Activated CD4-positive, alpha-beta memory T cell treated with anti-CD3 and anti-CD28 coated beads for 36 hours (primary cell): ENCODE measurements at regions of chr19 and their contacts with region 1.

Region 1: DNA sequence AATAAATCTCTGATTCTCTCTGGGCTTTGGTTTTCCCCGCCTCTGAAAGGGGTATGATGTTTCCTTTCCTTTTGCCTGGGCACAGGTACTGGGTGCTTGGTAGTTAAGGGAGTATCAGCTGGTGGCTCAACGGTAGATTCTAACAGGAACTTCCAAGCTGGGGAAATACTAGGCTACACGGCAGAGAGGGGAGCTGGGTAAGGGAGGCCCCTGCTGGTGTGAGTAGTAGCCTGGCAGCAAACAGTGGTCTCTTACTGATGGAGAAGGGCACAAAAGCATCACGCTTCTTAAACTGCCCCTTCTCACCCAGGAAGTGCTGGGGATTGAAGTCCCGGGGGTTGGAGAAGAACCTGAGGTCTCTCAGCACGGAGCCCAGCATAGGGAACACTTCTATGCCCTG is 26.9 kb upstream of the CYP2A7 start:
- DNase-seq: peak; percentile 63
- H3K4me3 Mint-ChIP-seq: peak overlapping the region; percentile 65
- H3K27ac Mint-ChIP-seq: no peak overlapping the region
- H3K4me1 Mint-ChIP-seq: peaks cover 9% of the 10 kb centered on the region
- H3K27me3 Mint-ChIP-seq: peaks cover 4% of the 10 kb centered on the region

Region 2: DNA sequence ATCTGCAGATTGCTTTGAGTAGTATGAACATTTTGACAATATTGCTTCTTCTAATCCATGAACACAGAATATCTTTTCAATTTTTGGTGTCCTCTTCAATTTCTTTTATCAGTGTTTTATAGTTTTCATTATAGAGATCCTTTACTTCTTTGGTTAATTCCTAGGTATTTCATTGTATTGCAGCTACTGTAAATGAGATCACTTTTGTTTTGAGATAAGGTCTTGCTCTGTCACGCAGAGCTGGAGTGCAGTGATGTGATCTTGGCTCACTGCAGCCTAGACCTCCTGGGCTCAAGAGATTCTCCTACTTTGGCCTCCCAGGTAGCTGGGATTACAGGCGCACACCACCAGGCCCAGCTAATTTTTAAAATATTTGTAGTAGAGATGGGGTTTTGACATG is 36.8 kb before region 1 on chr19:
- CTCF ChIA-PET with region 1: interaction called, 3 read pairs
- POLR2A ChIA-PET with region 1: no interaction called
- intact Hi-C with region 1: loop called (anchors 1 kb)
- DNase-seq: no peak
- H3K4me3 Mint-ChIP-seq: no peak overlapping the region
- H3K27ac Mint-ChIP-seq: no peak overlapping the region
- H3K4me1 Mint-ChIP-seq: peaks cover 7% of the 10 kb centered on the region
- H3K27me3 Mint-ChIP-seq: peaks cover 8% of the 10 kb centered on the region